Mammary epithelial cell (primary cell): ENCODE measurements at regions of chr10 and their contacts with region 1.

Region 1: DNA sequence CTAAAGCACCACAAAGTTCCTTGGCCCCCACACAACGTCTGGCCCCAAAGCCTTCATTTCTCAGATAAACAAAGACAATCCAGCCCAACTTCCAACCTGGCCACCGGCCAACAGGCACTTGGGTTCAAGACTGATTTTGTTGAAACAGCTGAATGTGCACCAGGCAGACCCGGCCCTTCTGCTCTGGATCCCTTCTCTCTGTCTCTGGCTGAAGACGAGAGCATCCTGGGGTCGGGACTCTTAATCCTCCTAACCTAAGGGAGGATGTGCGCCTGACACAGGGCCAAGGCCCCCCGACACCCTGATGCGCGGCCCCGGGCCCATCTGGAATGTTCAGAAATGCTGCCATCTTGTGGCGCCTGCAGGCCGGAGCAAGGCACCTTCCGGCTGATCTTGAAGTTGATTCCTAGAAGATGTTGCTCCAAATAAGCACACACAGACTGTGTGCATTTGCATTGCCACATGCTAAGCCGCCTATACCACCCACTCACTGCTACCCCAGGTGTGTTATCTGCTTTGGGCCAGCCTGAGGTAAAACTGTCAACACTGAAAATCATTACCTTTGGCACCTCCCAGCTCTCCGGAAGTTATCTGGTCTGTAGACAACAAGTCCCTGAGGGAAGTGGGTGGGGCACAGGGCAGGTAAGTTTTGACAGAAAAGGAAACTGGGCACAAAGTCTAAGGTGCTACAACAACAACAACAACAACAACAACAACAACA is 98.4 kb upstream of the HABP2 start:
- DNase-seq: no peak
- H3K4me3 ChIP-seq: no peak overlapping the region
- H3K27ac ChIP-seq: no peak overlapping the region
- H3K4me1 ChIP-seq: no peaks in the 10 kb centered on the region
- H3K27me3 ChIP-seq: no peaks in the 10 kb centered on the region
- CTCF ChIP-seq: peak; percentile 60 to 77

Region 2: DNA sequence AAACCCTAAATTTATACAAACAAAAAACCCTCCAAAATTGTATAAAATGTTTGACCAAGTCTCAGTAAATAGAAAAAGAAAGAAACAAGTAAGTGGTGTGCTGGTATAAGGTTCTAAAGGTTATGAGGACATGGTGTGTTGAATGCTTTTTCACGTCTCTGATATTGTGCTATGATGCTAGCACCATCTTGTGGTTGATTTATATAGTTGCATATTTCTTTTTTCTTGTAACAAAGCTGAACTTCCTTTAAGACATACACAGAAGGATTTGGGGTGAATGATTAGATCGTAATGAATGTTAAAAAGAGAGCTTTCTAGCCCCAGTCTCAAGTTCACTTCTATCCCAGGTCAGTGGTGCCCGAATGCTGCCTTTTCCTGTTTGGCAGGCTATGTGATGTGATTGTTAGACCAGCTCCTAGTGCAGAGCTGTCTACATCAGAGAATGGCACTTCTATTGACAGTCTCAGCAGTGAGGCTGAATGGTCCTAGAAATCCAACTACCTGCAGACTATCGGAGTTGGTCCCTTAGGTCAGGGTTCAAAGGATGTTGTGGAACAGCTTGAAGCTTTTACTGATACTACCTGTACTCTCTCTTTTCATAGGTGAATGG is 982.5 kb before region 1 on chr10:
- CTCF ChIA-PET with region 1: no interaction called
- dilution Hi-C with region 1: no loop called
- in situ Hi-C with region 1: no loop called
- intact Hi-C with region 1: loop called (anchors 10 kb)
- DNase-seq: peak; percentile 28
- H3K4me3 ChIP-seq: no peak overlapping the region
- H3K27ac ChIP-seq: no peak overlapping the region
- H3K4me1 ChIP-seq: no peaks in the 10 kb centered on the region
- H3K27me3 ChIP-seq: no peaks in the 10 kb centered on the region
- CTCF ChIP-seq: peak; percentile 67 to 68

Region 3: GRCh38 chr10:113169853-113170460 is 284.5 kb before region 1 on chr10:
- CTCF ChIA-PET with region 1: interaction called, 33 read pairs
- dilution Hi-C with region 1: no loop called
- in situ Hi-C with region 1: no loop called
- intact Hi-C with region 1: no loop called
- DNase-seq: no peak
- H3K4me3 ChIP-seq: no peak overlapping the region
- H3K27ac ChIP-seq: no peak overlapping the region
- H3K4me1 ChIP-seq: no peaks in the 10 kb centered on the region
- H3K27me3 ChIP-seq: no peaks in the 10 kb centered on the region
- CTCF ChIP-seq: no peak

Region 4: GRCh38 chr10:113216102-113216501 is 238.4 kb before region 1 on chr10:
- CTCF ChIA-PET with region 1: interaction called, 10 read pairs
- dilution Hi-C with region 1: no loop called
- in situ Hi-C with region 1: no loop called
- intact Hi-C with region 1: loop called (anchors 1 kb)
- DNase-seq: peak; percentile 12
- H3K4me3 ChIP-seq: no peak overlapping the region
- H3K27ac ChIP-seq: no peak overlapping the region
- H3K4me1 ChIP-seq: no peaks in the 10 kb centered on the region
- H3K27me3 ChIP-seq: peaks cover 3% of the 10 kb centered on the region
- CTCF ChIP-seq: peak; percentile 33 to 62

Region 5: DNA sequence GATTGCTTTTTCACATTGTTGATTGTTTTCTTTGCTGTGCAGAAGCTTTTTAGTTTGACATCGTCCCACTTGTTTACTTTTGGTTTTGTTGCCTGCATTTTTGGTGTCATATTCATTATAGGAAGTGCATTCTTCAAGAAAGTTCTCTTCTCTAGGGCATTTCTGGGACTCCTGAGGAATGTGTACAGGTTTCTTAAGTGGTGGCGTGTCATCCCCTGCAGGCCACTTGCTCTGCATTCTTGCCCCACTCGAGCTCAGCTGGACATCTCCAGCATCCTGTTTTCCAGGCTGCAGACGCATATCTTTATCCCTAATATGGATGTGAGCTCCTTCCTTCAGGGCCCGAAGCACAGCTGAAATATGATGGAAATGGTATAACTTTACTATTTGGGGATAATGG is 157.3 kb before region 1 on chr10:
- CTCF ChIA-PET with region 1: no interaction called
- dilution Hi-C with region 1: no loop called
- in situ Hi-C with region 1: no loop called
- intact Hi-C with region 1: no loop called
- DNase-seq: no peak
- H3K4me3 ChIP-seq: no peak overlapping the region
- H3K27ac ChIP-seq: no peak overlapping the region
- H3K4me1 ChIP-seq: no peaks in the 10 kb centered on the region
- H3K27me3 ChIP-seq: no peaks in the 10 kb centered on the region
- CTCF ChIP-seq: no peak

Region 6: GRCh38 chr10:113475381-113475807 is 20.9 kb after region 1 on chr10:
- CTCF ChIA-PET with region 1: no interaction called
- dilution Hi-C with region 1: no loop called
- in situ Hi-C with region 1: no loop called
- intact Hi-C with region 1: loop called (anchors 2 kb)
- DNase-seq: peak; percentile 64
- H3K4me3 ChIP-seq: no peak overlapping the region
- H3K27ac ChIP-seq: no peak overlapping the region
- H3K4me1 ChIP-seq: peaks cover 30% of the 10 kb centered on the region
- H3K27me3 ChIP-seq: no peaks in the 10 kb centered on the region
- CTCF ChIP-seq: peak; percentile 21 to 46